Aorta (tissue), 5 donors: ENCODE measurements at regions of chr7 and their contacts with region 1.

Region 1: DNA sequence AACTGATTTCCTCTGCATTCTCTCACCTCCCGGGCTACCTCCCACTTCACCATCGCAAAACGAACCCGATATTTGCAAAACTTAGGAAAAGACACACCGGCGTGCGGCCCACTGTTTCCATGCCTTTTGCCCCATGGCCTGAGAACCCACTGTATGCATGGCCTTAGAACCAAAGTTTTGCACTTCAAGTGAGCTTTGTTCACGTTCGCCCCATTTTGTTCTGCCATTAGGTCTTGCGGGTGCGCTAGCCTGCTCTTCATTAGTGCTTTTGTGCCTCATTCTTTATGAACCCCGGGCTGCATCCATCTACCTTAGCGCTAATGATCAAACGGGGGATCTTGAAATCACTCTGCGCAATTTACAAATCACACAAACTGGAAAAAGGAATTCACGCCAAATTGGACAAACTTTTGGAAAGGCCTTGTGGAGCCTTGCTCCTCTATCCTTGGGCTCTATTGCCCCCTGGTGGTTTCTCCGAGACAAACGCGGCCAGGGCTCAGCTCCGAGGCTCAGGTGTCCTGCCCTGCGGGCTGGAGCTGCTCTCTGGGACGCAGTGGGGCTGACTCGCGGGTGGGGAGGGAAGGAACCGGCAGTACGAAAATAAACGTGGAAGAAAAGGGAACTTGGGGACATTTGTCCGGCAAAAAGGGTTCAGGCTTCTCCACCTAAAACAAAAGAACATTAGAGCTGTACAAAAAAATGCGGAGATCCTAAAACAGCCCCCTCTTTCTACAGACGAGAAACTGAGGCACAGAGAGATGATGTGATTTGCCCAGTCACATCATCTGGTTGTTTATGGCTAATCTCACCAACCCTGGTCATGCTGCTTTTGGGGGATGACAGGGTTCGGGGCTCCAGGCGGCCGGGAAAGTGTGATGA is 300.4 kb upstream of the NFE2L3 start:
- DNase-seq: peak; percentile 84 to 94
- ATAC-seq: peak; percentile 81
- H3K4me3 ChIP-seq: no peak overlapping the region
- H3K27ac ChIP-seq: no peak overlapping the region
- H3K4me1 ChIP-seq: peaks cover 5 to 8% of the 10 kb centered on the region in 2 donors
- H3K27me3 ChIP-seq: no peaks in the 10 kb centered on the region

Region 2: DNA sequence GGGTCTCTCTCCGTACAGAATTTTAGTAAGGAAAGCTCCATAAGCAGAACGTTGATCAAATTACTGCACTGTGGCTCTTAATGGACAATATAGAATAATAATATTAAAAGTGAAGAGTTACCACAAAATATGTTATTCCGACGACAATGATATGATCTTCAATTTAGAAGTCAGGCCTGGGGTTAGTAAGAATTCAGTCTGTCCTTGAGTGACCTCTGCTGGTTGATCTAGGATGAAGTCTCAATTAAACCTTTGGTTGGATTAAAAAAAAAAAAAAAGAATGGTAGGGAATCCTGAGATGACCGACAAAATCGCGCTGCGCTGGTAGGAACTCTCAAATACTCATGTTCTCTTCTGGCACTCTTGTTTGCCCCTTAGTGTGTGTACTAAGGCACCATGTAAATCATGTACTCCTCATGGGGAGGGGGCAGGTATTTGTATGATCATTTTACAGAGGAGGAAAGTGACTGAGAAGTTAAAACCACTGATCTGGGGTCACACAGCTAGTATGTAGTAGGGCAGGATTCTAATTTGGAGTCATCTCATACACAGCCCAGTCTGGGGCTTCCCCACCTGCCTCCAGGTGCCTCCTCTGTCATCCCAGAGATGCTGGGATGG is 462.0 kb before region 1 on chr7:
- intact Hi-C with region 1: loop called (anchors 1 kb)
- DNase-seq: no peak
- ATAC-seq: peak; percentile 49
- H3K4me3 ChIP-seq: no peak overlapping the region
- H3K27ac ChIP-seq: no peak overlapping the region
- H3K4me1 ChIP-seq: peaks cover 0 to 4% of the 10 kb centered on the region in 2 donors
- H3K27me3 ChIP-seq: no peaks in the 10 kb centered on the region

Region 3: DNA sequence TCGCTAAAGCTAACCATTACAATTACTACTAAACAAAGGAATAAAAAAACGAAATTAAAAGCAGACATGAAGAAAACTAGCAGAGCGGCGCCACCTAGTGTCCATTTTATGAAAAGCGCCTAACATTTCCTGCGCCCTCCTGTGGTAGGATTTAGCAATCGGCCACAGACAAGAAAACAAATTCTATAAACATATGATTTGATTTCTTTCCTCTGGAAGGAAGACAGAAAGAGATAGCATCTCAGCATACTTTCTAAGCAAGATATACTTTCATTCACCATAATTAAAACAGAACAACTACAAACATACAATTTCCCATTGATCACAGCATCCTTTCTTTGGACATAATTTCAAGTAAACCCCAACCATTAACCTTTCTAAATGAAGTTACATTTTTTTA is 285.6 kb before region 1 on chr7:
- intact Hi-C with region 1: loop called (anchors 1 to 2 kb)
- DNase-seq: peak in 1 of 2 donors; percentile 53
- ATAC-seq: peak; percentile 66
- H3K4me3 ChIP-seq: no peak overlapping the region
- H3K27ac ChIP-seq: no peak overlapping the region
- H3K4me1 ChIP-seq: peaks cover 0 to 3% of the 10 kb centered on the region in 2 donors
- H3K27me3 ChIP-seq: no peaks in the 10 kb centered on the region

Region 4: GRCh38 chr7:25663877-25664276 is 187.7 kb before region 1 on chr7:
- intact Hi-C with region 1: loop called in 1 of 2 experiments (anchors 5 kb)
- DNase-seq: no peak
- ATAC-seq: no peak
- H3K4me3 ChIP-seq: no peak overlapping the region
- H3K27ac ChIP-seq: no peak overlapping the region
- H3K4me1 ChIP-seq: peaks cover 0 to 5% of the 10 kb centered on the region in 2 donors
- H3K27me3 ChIP-seq: no peaks in the 10 kb centered on the region

Region 5: GRCh38 chr7:25752967-25753791 is 98.4 kb before region 1 on chr7:
- intact Hi-C with region 1: loop called (anchors 5 kb)
- DNase-seq: no peak
- ATAC-seq: peak; percentile 63
- H3K4me3 ChIP-seq: no peak overlapping the region
- H3K27ac ChIP-seq: peak overlapping the region; percentile 10 to 72
- H3K4me1 ChIP-seq: peaks cover 0 to 10% of the 10 kb centered on the region in 2 donors
- H3K27me3 ChIP-seq: no peaks in the 10 kb centered on the region

Region 6: GRCh38 chr7:25968205-25968993 is 116.8 kb after region 1 on chr7:
- intact Hi-C with region 1: no loop called
- DNase-seq: no peak
- ATAC-seq: no peak
- H3K4me3 ChIP-seq: no peak overlapping the region
- H3K27ac ChIP-seq: no peak overlapping the region
- H3K4me1 ChIP-seq: peaks cover 2 to 3% of the 10 kb centered on the region in 2 donors
- H3K27me3 ChIP-seq: peaks cover 0 to 5% of the 10 kb centered on the region in 2 donors

Region 7: GRCh38 chr7:26864309-26865093 is 1012.9 kb after region 1 on chr7 and contains the start of gene SKAP2:
- intact Hi-C with region 1: loop called in 1 of 2 experiments (anchors 5 kb)
- DNase-seq: peak; percentile 99
- ATAC-seq: peak; percentile 99
- H3K4me3 ChIP-seq: peak within 1 kb of the TSS; percentile 45 to 66
- H3K27ac ChIP-seq: peak within 1 kb of the TSS in 1 of 2 donors; percentile 19
- H3K4me1 ChIP-seq: no peaks in the 10 kb centered on the region
- H3K27me3 ChIP-seq: no peaks in the 10 kb centered on the region
- total RNA-seq, gene SKAP2: 43.4 to 48.5 TPM